Endothelial cell of umbilical vein (primary cell): ENCODE measurements at regions of chr2 and their contacts with region 1.

Region 1: GRCh38 chr2:26901326-26902183 is 53.6 kb downstream of the DPYSL5 start:
- DNase-seq: no peak
- H3K4me3 ChIP-seq: no peak overlapping the region
- H3K27ac ChIP-seq: no peak overlapping the region
- H3K4me1 ChIP-seq: no peaks in the 10 kb centered on the region
- H3K27me3 ChIP-seq: peaks cover 11 to 12% of the 10 kb centered on the region in 2 experiments
- CTCF ChIP-seq: no peak
- POLR2A ChIP-seq: no peak

Region 2: DNA sequence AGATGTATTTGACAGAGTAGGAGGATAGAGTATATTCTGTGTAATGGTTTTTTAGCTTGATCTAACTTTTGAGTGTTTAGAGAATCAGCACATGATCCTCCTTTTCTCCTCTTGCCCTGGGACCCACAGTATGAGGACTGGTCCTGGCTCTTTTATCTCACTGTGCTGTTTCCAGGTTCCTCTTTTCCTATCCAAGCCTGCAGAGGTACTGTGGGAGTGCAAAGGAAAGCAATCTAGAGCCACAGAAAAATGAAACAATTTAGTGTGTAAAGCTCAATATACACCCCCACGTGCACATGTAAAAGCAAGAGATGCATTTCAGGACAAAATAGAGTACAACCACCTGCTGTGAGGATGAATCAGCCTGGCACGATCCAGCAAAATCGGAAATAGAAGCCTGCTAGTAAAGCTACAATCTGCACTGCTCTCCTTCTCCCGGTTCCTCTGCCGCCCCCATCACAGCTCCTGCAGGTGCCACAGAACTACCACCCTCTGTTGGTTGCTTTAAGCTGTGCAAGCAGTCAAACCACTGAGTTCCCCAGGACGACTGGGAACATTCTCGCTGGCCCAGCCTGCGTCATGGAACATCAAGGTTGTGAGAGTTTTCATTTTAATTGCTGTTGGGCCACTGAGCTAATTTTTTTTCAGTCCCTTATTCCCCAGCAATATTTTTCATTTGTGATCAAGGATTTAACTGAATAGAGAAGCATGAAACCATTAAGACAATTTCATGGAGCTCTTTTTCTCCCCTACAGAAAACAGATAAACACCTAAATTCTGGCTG is 21.0 kb after region 1 on chr2:
- CTCF ChIA-PET with region 1: interaction called, 22 read pairs
- POLR2A ChIA-PET with region 1: no interaction called
- dilution Hi-C with region 1: no loop called
- intact Hi-C with region 1: no loop called
- DNase-seq: peak; percentile 33
- H3K4me3 ChIP-seq: no peak overlapping the region
- H3K27ac ChIP-seq: no peak overlapping the region
- H3K4me1 ChIP-seq: no peaks in the 10 kb centered on the region
- H3K27me3 ChIP-seq: peaks cover 2 to 5% of the 10 kb centered on the region in 2 experiments
- CTCF ChIP-seq: peak; percentile 24 to 63
- POLR2A ChIP-seq: no peak

Region 3: GRCh38 chr2:28155627-28156026 is 1254.1 kb after region 1 on chr2:
- CTCF ChIA-PET with region 1: no interaction called
- POLR2A ChIA-PET with region 1: no interaction called
- dilution Hi-C with region 1: no loop called
- intact Hi-C with region 1: loop called (anchors 10 kb)
- DNase-seq: no peak
- H3K4me3 ChIP-seq: no peak overlapping the region
- H3K27ac ChIP-seq: no peak overlapping the region
- H3K4me1 ChIP-seq: no peaks in the 10 kb centered on the region
- H3K27me3 ChIP-seq: no peaks in the 10 kb centered on the region
- CTCF ChIP-seq: peak; percentile 46 to 47
- POLR2A ChIP-seq: no peak